ENCODE measurements at regions of chr11 and their contacts with region 1.

Region 1: DNA sequence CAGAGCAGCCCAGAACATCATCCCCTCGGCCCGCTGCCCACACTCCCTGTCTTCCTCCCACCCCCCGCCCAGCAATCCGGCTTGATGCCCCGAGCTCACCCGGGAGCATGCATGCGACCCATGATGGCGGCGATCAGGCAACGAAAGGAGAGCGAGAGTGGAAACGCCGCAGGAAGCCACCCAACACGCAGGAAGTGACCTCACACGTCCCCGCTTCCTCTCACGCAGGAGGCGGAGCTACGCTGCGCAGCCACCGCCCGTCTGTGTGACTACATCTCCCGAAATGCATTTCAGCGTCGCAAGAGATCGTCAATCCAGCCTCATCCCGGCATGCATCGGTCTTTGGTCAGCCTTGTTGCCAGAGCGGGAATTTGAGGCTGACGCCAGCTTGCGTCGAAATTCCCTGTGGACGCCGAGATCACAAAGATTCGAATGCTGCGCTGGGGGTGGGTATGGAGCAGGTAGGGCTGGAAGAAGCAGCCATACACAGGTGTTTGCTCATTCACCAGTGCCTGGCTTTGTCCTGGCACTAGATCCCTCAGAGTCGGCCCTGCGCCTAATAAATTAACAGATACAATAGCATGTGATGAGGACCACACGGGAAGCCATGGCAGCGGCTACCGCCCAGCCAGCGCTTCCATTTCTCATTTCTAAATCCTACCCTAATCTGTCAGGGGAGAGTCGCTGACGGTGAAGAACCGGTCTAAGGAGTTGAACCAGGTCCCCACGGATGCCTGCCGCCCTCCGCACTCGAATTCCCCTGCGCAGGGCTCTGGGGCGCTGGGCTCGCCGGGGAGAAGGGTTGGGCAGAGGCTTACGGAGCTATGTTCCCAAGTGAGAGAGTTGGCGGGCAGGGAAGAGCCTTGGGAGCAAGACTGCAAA is at the start of gene RPS13:
- DNase-seq: peak; percentile 76 to 95 (median 93)
- ATAC-seq: peak; percentile 98
- H3K4me3 ChIP-seq: peak within 1 kb of the TSS; percentile 87
- H3K4me3 Mint-ChIP-seq: peak within 1 kb of the TSS; percentile 91 to 99 (median 98)
- H3K27ac ChIP-seq: peak within 1 kb of the TSS; percentile 91
- H3K27ac Mint-ChIP-seq: peak within 1 kb of the TSS; percentile 96 to 99 (median 99)
- H3K4me1 ChIP-seq: peaks cover 12 to 27% of the 10 kb centered on the region in 2 donors
- H3K4me1 Mint-ChIP-seq: peaks cover 25 to 60% (median 37%) of the 10 kb centered on the region in 7 donors
- H3K27me3 ChIP-seq: no peaks in the 10 kb centered on the region
- H3K27me3 Mint-ChIP-seq: no peaks in the 10 kb centered on the region
- total RNA-seq, gene RPS13: 1,062 to 2,591 (median 2,234) TPM

Region 2: DNA sequence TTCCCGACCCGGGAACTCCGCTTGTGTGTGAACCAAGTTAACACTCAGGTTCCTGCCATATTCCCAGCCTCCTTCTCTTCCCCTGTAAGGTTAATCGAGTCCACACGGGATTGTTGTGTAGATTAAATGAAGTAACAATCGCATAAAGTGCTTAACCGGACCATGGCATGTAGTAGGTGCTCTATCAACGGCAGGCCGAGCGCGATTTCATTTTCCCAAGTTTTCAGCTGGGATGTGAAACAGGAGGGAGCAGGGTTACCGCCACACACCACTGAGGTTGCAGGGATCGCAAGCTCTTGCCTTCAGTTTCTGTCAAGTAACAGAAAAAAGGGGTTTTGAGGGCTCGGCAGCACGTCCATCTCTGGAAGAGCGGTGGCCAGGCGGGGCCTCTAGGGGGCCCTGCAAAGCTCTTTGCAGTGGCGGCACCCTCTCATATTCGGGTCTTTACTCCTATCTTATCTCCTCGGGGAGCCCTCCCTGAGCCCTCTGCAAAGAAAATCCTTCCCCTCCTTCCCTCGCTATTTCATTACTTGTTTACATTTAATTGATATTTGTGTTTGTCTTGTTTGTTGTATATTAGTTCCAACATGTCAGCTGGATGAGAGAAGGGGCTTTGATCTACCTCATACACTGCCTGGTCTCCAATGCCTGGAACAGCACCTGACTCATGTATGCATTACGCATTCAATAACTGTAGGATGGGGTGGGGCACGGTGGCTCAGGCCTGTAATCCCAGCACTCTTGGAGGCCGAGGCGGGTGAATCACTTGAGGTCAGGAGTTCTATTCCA is 62.7 kb before region 1 on chr11:
- CTCF ChIA-PET with region 1: no interaction called
- POLR2A ChIA-PET with region 1: no interaction called
- intact Hi-C with region 1: loop called in 1 of 2 experiments (anchors 2 kb)
- DNase-seq: peak in 6 of 9 donors; percentile 1 to 28 (median 15)
- ATAC-seq: peak; percentile 58
- H3K4me3 ChIP-seq: peak overlapping the region; percentile 52
- H3K4me3 Mint-ChIP-seq: peak overlapping the region in 9 of 10 donors; percentile 79 to 99 (median 93)
- H3K27ac ChIP-seq: no peak overlapping the region
- H3K27ac Mint-ChIP-seq: peak overlapping the region in 4 of 9 donors; percentile 45 to 81 (median 60)
- H3K4me1 ChIP-seq: no peaks in the 10 kb centered on the region
- H3K4me1 Mint-ChIP-seq: peaks cover 3 to 9% (median 8%) of the 10 kb centered on the region in 7 donors
- H3K27me3 ChIP-seq: peaks cover 0 to 7% of the 10 kb centered on the region in 2 donors
- H3K27me3 Mint-ChIP-seq: peaks cover 14 to 40% (median 18%) of the 10 kb centered on the region in 5 donors

Region 3: DNA sequence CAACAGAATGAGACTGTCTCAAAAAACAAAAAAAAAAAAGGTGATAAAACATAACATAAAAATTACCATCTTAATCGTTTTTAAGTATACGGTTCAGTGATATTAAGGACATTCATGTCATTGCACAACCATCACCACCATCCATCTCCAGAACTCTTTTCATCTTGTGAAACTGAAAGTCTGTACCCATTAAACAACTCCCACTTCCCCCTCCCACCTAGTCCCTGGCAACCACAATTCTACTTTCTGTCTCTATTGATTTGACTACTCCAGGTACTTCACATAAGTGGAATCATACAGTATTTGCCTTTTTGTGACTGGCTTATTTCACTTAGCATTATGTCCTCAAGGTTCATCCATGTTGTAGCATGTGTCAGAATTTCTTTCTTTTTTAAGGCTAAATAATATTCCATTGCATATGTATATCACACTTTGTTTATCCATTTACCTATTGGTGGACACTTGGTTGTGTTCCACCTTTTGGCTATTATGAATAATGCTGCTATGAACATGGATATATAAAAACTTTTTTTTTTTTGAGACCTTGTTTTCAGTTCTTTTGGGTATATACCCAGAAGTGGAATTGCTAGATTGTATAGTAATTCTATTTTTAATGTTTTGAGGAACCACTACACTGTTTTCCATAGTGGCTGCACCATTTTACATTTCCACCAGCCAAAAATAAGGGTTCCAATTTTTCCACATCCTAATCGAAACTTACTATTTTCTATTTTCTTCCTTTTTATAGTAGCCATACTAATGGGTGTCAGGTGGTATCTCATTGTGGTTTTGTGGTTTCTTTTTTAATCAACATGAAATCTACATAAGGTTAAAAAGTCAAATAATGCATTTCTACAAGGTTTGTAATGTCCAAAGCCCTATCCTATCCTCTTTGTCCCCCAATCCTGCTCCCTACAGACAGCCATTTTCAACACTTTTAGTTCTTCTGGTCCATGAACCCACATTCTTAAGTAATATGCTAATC is 153.4 kb after region 1 on chr11:
- CTCF ChIA-PET with region 1: no interaction called
- POLR2A ChIA-PET with region 1: no interaction called
- intact Hi-C with region 1: no loop called
- DNase-seq: peak in 8 of 9 donors; percentile 20 to 62 (median 36)
- ATAC-seq: peak; percentile 79
- H3K4me3 ChIP-seq: no peak overlapping the region
- H3K4me3 Mint-ChIP-seq: peak overlapping the region in 6 of 10 donors; percentile 2 to 55 (median 26)
- H3K27ac ChIP-seq: no peak overlapping the region
- H3K27ac Mint-ChIP-seq: peak overlapping the region in 4 of 9 donors; percentile 14 to 90 (median 60)
- H3K4me1 ChIP-seq: peaks cover 3 to 7% of the 10 kb centered on the region in 2 donors
- H3K4me1 Mint-ChIP-seq: peaks cover 7 to 19% (median 14%) of the 10 kb centered on the region in 7 donors
- H3K27me3 ChIP-seq: no peaks in the 10 kb centered on the region
- H3K27me3 Mint-ChIP-seq: peaks cover 0 to 27% (median 0%) of the 10 kb centered on the region in 5 donors

Region 4: DNA sequence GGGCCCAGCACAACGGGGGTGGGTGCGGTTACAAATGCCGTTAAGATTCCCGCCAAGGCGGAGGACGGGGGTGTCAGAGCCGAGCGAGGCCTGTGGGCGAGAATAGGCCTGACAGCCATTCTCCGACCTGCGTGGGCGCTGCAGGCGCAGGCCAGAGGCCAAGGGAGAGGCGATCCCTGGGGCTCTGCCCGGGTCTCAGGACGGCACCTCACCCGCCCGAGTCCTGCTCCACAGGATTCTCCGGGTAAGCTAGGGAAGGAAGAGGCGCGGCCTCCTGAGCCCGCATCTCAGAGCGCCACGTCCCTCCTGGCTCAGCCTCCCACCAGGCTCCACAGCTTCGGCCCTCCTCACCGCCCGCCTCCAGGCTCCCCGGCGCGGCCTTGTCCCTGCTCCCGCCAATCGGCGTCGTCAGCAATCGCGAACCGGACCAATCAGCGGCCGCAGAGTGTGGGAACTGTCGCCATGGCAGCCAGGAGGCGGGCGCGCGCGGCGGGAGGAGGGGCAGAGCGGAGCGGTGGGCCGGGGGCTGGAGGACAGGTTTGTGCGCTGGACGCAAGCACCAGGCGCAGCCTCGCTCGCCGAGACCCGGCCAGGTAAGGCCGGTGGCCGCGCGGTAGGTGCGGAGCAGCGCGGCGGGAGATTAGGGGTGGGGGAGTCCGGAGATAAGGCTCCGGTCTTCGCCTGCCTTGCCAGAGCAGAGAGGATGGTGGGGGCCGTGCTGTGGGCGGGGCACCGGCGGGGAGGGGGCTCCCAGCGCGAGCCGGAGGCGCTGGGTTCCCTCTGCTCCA is 198.7 kb after region 1 on chr11 and contains the start of gene NUCB2:
- CTCF ChIA-PET with region 1: no interaction called
- POLR2A ChIA-PET with region 1: interaction called, 16 read pairs
- intact Hi-C with region 1: loop called (anchors 1 kb)
- DNase-seq: peak; percentile 92 to 98 (median 95)
- ATAC-seq: peak; percentile 96
- H3K4me3 ChIP-seq: peak within 1 kb of the TSS; percentile 78
- H3K4me3 Mint-ChIP-seq: peak within 1 kb of the TSS; percentile 83 to 99 (median 93)
- H3K27ac ChIP-seq: peak within 1 kb of the TSS; percentile 90
- H3K27ac Mint-ChIP-seq: peak within 1 kb of the TSS; percentile 88 to 93 (median 91)
- H3K4me1 ChIP-seq: peaks cover 17 to 28% of the 10 kb centered on the region in 2 donors
- H3K4me1 Mint-ChIP-seq: peaks cover 19 to 48% (median 38%) of the 10 kb centered on the region in 7 donors
- H3K27me3 ChIP-seq: no peaks in the 10 kb centered on the region
- H3K27me3 Mint-ChIP-seq: no peaks in the 10 kb centered on the region
- total RNA-seq, gene NUCB2: 72.0 to 171 (median 145) TPM

Region 5: DNA sequence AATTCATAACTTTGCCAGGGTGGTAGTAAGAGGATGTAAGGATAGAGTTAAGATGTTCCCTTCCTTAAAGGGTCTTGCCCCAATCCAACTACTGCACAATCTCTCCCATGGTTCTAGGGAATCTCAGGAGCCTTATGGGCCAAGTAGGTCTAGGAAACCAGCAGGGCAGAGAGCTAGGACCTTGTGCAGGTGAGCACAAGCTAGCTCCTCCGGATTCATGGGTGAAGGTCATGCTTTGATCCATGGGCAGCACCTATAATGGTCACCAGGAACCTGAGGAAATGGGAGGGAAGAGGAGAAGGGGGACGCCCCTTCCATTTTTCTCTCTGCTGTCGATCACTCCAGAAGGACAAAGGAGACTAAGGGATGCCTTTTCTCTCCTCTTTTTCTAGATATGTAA is 293.9 kb after region 1 on chr11:
- CTCF ChIA-PET with region 1: no interaction called
- POLR2A ChIA-PET with region 1: no interaction called
- intact Hi-C with region 1: no loop called
- DNase-seq: no peak
- ATAC-seq: no peak
- H3K4me3 ChIP-seq: no peak overlapping the region
- H3K4me3 Mint-ChIP-seq: no peak overlapping the region
- H3K27ac ChIP-seq: no peak overlapping the region
- H3K27ac Mint-ChIP-seq: no peak overlapping the region
- H3K4me1 ChIP-seq: no peaks in the 10 kb centered on the region
- H3K4me1 Mint-ChIP-seq: peaks cover 0 to 10% (median 0%) of the 10 kb centered on the region in 7 donors
- H3K27me3 ChIP-seq: no peaks in the 10 kb centered on the region
- H3K27me3 Mint-ChIP-seq: no peaks in the 10 kb centered on the region

Region 6: DNA sequence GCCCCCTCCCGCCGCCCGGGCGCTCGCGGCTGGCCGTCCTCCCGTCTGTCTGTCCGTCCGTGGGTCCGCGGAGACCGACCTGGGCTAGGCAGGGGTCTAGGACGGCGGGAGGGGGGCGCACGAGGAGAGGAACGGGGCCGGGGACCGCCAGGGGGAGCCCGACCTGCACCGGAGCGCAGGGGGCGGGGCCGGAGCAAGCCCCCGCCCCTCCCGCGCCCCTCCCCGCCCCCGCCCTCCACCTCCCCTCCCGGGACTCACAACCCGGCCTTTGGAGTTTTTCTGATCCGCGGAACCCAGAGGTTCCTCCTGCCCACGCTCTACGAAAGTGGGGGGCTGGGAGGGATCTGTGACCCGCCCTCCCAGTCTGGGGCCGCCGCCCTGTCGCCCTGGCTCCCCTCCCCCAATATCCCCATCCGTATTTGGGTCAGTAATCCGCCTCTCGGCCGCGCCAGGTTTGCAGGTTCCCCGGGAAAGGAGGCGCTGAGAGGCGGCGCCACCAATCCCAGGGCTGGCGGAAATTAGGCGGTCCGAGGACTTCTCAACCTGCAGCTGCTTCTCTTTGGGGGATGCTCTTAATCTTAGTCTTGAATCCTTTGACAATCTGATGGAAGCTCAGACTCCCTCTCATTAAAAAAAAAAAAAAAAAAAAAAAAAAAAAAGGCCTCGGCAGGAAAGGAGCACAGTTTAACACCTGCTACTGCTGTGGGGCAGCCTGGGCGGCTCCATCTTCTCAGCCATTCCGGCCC is 311.6 kb after region 1 on chr11:
- CTCF ChIA-PET with region 1: no interaction called
- POLR2A ChIA-PET with region 1: no interaction called
- intact Hi-C with region 1: loop called in 1 of 2 experiments (anchors 1 kb)
- DNase-seq: peak; percentile 57 to 87 (median 80)
- ATAC-seq: peak; percentile 96
- H3K4me3 ChIP-seq: peak overlapping the region; percentile 62
- H3K4me3 Mint-ChIP-seq: peak overlapping the region; percentile 77 to 90 (median 83)
- H3K27ac ChIP-seq: peak overlapping the region; percentile 66
- H3K27ac Mint-ChIP-seq: peak overlapping the region in 7 of 9 donors; percentile 12 to 84 (median 55)
- H3K4me1 ChIP-seq: peaks cover 0 to 4% of the 10 kb centered on the region in 2 donors
- H3K4me1 Mint-ChIP-seq: peaks cover 0 to 9% (median 5%) of the 10 kb centered on the region in 7 donors
- H3K27me3 ChIP-seq: no peaks in the 10 kb centered on the region
- H3K27me3 Mint-ChIP-seq: peaks cover 0 to 16% (median 0%) of the 10 kb centered on the region in 5 donors